ENCODE measurements at regions of chr9 and their contacts with region 1.

Region 1: GRCh38 chr9:95189251-95190098 is 128.0 kb downstream of the FANCC start:
- DNase-seq: peak; percentile 37
- H3K4me3 Mint-ChIP-seq: peak overlapping the region; percentile 46
- H3K27ac Mint-ChIP-seq: peak overlapping the region; percentile 71
- H3K4me1 Mint-ChIP-seq: peaks cover 35% of the 10 kb centered on the region
- H3K27me3 Mint-ChIP-seq: no peaks in the 10 kb centered on the region

Region 2: GRCh38 chr9:95268681-95269080 is 79.2 kb after region 1 on chr9:
- intact Hi-C with region 1: loop called (anchors 2 kb)
- DNase-seq: no peak
- H3K4me3 Mint-ChIP-seq: no peak overlapping the region
- H3K27ac Mint-ChIP-seq: no peak overlapping the region
- H3K4me1 Mint-ChIP-seq: peaks cover 42% of the 10 kb centered on the region
- H3K27me3 Mint-ChIP-seq: no peaks in the 10 kb centered on the region

Region 3: GRCh38 chr9:95425910-95426551 is 236.6 kb after region 1 on chr9:
- intact Hi-C with region 1: no loop called
- DNase-seq: no peak
- H3K4me3 Mint-ChIP-seq: peak overlapping the region; percentile 42
- H3K27ac Mint-ChIP-seq: no peak overlapping the region
- H3K4me1 Mint-ChIP-seq: peaks cover 9% of the 10 kb centered on the region
- H3K27me3 Mint-ChIP-seq: peaks cover 3% of the 10 kb centered on the region